Activated CD4-positive, alpha-beta T cell treated with anti-CD3 and anti-CD28 coated beads for 36 hours (primary cell): ENCODE measurements at regions of chr1 and their contacts with region 1.

Region 1: GRCh38 chr1:1231400-1232223 is at the start of gene SDF4:
- DNase-seq: peak; percentile 98
- ATAC-seq: peak; percentile 98
- H3K4me3 Mint-ChIP-seq: peak within 1 kb of the TSS; percentile 94
- H3K27ac Mint-ChIP-seq: peak within 1 kb of the TSS; percentile 91
- H3K4me1 Mint-ChIP-seq: peaks cover 35% of the 10 kb centered on the region
- H3K27me3 Mint-ChIP-seq: no peaks in the 10 kb centered on the region
- total RNA-seq, gene SDF4: 108 to 128 TPM

Region 2: DNA sequence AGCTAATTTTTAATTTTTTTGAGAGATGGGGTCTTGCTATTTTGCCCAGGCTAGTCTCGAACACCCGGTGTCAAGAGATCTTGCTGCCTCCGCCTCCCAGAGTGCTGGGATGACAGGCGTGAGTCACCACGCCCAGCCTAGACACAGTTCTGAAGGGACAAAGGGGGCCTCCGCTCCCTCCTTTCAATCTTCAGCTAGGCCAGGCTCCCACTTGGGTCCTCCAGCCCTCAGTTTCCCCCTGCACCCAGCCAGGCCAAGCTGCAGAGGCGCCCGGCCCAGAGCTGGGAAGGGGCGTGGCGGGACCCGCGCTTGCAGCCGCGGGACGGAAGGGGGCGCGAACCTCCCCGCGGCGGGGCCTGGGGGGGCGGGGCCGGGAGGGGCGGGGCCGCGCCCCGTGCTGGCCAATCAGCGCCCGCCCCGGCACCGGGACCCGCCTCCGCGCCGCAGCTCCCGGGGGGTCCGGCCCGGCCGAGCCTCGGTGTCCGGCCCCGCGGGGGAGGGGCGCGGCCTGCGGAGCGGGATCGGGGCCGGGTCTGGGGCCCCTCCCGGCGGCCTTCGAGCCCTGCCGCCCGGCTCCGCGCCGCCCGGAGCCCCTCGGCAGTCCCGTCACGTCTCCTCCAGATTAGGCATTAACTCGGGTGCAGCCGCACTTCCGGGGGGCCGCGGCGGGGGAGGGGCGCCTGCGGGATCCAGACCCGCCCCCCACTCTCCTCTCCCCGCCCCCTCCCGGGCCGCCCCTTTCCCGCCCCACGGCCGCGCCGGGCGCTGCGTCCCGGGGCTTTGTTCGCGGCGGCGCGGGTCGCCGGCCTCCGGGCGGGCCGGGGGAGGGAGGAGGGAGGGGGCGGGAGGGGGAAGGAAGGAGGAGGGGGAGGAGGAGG is 212.3 kb before region 1 on chr1:
- CTCF ChIA-PET with region 1: no interaction called
- POLR2A ChIA-PET with region 1: no interaction called
- intact Hi-C with region 1: loop called in 1 of 2 experiments (anchors 1 kb)
- DNase-seq: peak; percentile 90
- ATAC-seq: peak; percentile 75
- H3K4me3 Mint-ChIP-seq: peak overlapping the region; percentile 59
- H3K27ac Mint-ChIP-seq: no peak overlapping the region
- H3K4me1 Mint-ChIP-seq: peaks cover 15% of the 10 kb centered on the region
- H3K27me3 Mint-ChIP-seq: peaks cover 9% of the 10 kb centered on the region

Region 3: DNA sequence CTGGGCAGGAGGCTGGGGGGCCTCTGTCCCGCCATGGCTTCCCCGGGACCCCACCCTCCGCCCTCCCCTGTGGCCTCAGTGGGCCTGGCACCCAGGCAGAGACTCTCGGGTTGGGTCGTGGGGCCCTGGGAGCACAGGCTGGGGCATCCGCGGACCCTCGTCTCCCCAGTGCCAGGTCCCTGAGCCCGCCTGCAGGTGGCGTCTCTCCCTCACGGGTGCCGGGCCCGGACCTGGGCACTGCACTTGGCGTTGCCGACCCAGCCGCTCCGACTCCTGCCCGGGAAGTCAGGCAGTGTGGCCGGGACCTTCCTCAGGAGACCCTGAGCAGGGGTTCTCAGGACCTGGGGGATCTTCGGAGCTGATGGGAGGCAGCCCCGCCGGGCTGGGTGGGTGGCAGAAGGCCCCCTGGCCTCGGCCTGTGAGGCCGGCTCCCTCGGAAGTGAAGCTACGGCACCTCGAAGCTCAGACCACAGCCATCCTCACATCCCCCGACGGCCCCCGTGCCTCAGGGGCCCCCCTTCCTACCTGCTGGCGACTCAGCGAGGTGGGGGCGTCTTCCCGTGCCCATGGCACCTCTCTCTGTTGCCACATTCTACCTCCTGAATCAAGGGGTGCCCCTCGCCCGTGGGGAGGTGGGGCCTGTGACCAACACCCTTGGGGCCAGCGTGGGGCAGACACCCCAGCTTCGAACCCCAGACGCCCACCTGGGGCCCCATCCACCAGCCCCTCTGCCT is 109.4 kb before region 1 on chr1:
- CTCF ChIA-PET with region 1: interaction called, 18 read pairs
- POLR2A ChIA-PET with region 1: no interaction called
- intact Hi-C with region 1: loop called (anchors 1 kb)
- DNase-seq: peak; percentile 93
- ATAC-seq: peak; percentile 97
- H3K4me3 Mint-ChIP-seq: no peak overlapping the region
- H3K27ac Mint-ChIP-seq: no peak overlapping the region
- H3K4me1 Mint-ChIP-seq: no peaks in the 10 kb centered on the region
- H3K27me3 Mint-ChIP-seq: peaks cover 3% of the 10 kb centered on the region

Region 4: GRCh38 chr1:1217621-1218523 is 13.7 kb before region 1 on chr1:
- CTCF ChIA-PET with region 1: no interaction called
- POLR2A ChIA-PET with region 1: no interaction called
- intact Hi-C with region 1: loop called (anchors 1 to 2 kb)
- DNase-seq: peak; percentile 77
- ATAC-seq: peak; percentile 4
- H3K4me3 Mint-ChIP-seq: peak overlapping the region; percentile 66
- H3K27ac Mint-ChIP-seq: peak overlapping the region; percentile 92
- H3K4me1 Mint-ChIP-seq: peaks cover 49% of the 10 kb centered on the region
- H3K27me3 Mint-ChIP-seq: no peaks in the 10 kb centered on the region

Region 5: DNA sequence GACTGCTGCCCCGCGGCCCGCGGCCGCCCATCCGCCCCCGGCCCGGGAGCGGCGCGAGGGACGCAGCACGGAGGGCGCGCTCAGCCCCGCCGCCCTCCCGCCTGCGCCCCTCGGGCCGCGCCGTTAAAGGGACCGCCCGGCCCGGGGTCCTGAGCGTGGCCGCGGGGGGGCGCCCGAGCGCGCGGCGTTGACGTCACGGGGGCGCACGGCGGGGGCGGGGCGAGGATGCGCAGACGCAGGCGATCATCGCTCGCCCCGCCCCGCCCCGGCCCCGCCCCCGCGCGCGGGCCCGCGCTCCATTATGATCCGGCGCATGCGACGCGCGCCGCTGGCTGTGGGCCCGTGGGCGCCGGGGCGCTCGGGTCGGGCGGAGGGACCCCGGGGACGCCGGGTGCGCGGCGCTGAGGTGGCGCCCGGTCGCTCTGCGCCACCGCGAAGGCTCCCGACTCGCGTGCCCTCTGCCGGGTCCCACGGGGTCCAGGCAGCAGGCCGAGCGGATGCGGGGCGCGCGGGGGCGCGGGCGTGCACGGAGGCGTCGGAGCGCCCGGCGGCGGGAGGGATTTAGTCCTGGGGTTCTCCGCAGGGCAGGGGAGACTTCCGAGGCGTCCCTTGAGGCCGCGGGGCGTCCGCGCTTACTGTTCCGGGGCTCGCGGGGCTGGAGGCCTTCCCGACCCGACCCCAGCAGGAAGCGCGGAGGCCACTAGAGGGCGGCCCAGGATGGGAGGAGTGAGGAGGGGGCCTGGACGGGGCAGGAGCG is 117.8 kb after region 1 on chr1 and contains the start of gene DVL1:
- CTCF ChIA-PET with region 1: no interaction called
- POLR2A ChIA-PET with region 1: no interaction called
- intact Hi-C with region 1: loop called in 1 of 2 experiments (anchors 1 kb)
- DNase-seq: peak; percentile 81
- ATAC-seq: peak; percentile 71
- H3K4me3 Mint-ChIP-seq: peak within 1 kb of the TSS; percentile 74
- H3K27ac Mint-ChIP-seq: no peak within 1 kb of the TSS
- H3K4me1 Mint-ChIP-seq: peaks cover 25% of the 10 kb centered on the region
- H3K27me3 Mint-ChIP-seq: peaks cover 11% of the 10 kb centered on the region
- total RNA-seq, gene DVL1: 35.3 to 35.5 TPM

Region 6: DNA sequence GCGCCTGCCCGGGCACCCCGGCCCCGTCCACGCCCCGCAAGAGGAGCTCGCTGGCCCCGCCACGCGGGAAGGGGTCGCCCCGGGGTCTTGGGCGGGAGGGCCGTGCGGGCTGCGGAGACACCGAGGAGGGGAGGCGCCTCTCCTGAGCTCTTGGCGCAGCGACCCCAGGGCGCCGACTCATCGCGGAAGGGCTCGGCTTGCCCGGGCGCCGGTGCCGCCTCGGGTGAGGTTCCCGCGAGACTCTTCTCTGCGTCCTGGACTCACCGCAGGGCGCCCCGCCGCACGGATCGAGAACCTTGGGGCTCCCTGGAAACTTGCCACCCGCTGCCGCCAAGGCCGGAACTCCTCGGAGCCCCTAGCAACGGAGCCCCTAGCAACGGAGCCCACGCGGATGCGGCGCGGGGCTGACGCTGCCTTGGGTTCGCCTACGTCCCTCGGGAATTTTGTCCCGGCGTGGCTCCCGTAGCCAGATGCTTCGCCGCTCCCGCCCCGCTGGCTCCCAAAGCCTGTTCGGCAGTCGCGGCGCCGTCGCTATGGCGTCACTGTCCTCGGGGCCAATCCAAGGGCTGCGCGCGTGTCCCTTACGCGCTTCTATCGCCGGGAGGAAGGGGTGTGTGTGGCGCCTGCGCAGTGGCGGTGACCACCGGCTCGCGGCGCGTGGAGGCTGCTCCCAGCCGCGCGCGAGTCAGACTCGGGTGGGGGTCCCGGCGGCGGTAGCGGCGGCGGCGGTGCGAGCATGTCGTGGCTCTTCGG is 280.1 kb after region 1 on chr1 and contains the start of gene ATAD3A:
- CTCF ChIA-PET with region 1: no interaction called
- POLR2A ChIA-PET with region 1: no interaction called
- intact Hi-C with region 1: loop called in 1 of 2 experiments (anchors 1 kb)
- DNase-seq: peak; percentile 99
- ATAC-seq: peak; percentile 97
- H3K4me3 Mint-ChIP-seq: peak within 1 kb of the TSS; percentile 93
- H3K27ac Mint-ChIP-seq: peak within 1 kb of the TSS; percentile 97
- H3K4me1 Mint-ChIP-seq: peaks cover 7% of the 10 kb centered on the region
- H3K27me3 Mint-ChIP-seq: no peaks in the 10 kb centered on the region
- total RNA-seq, gene ATAD3A: 39.9 to 42.9 TPM